ENCODE measurements at regions of chr2 and their contacts with region 1.

Region 1: GRCh38 chr2:179264368-179265081 is at the start of gene SESTD1:
- H3K4me3 Mint-ChIP-seq: peak within 1 kb of the TSS; percentile 99
- H3K27ac Mint-ChIP-seq: peak within 1 kb of the TSS; percentile 97
- H3K4me1 Mint-ChIP-seq: peaks cover 46% of the 10 kb centered on the region
- H3K27me3 Mint-ChIP-seq: no peaks in the 10 kb centered on the region

Region 2: GRCh38 chr2:179234658-179235240 is 29.8 kb before region 1 on chr2:
- intact Hi-C with region 1: loop called (anchors 5 kb)
- H3K4me3 Mint-ChIP-seq: peak overlapping the region; percentile 17
- H3K27ac Mint-ChIP-seq: peak overlapping the region; percentile 70
- H3K4me1 Mint-ChIP-seq: peaks cover 52% of the 10 kb centered on the region
- H3K27me3 Mint-ChIP-seq: no peaks in the 10 kb centered on the region

Region 3: GRCh38 chr2:179253226-179253625 is 11.3 kb before region 1 on chr2:
- intact Hi-C with region 1: no loop called
- H3K4me3 Mint-ChIP-seq: no peak overlapping the region
- H3K27ac Mint-ChIP-seq: no peak overlapping the region
- H3K4me1 Mint-ChIP-seq: peaks cover 56% of the 10 kb centered on the region
- H3K27me3 Mint-ChIP-seq: no peaks in the 10 kb centered on the region